H1 (cell line): ENCODE measurements at regions of chr1 and their contacts with region 1.

Region 1: DNA sequence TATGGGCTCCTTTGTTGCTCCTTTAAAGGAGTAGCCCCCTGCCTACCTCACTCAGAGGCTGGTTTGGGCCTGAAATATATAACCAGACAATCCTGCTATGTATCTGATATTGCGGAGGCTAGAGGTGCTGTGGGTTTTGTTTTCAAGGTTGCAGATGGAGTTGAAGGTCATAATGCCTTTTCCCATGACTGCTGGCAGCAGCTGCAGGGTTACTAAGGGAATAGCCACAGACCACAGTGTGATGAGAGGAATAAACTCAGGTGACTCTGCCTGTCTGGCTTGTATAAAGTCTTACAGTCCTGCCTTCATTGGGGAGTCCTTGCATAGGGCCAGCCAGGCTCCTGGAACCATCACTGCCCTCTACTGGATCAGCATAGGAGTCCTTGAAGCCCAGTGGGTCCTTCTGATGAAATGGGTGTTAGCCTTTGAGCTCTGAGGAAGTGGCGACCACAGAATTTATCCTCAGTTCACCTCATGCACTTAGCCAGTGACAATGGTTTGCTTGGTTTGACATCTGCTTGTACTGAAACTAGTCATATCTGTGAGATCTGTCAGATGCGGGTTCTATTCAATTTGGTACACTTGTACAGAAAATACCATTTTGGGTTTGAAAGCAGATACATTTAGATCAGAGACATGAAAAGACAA is 174.4 kb upstream of the HMCN1 start:
- DNase-seq: peak; percentile 51 to 54
- H3K4me3 ChIP-seq: no peak overlapping the region
- H3K27ac ChIP-seq: no peak overlapping the region
- H3K4me1 ChIP-seq: no peaks in the 10 kb centered on the region; a peak in 2 of 7 replicates
- H3K27me3 ChIP-seq: no peaks in the 10 kb centered on the region
- CTCF ChIP-seq: peak; percentile 66 to 86 (median 67)
- EP300 ChIP-seq: no peak
- POLR2A ChIP-seq: no peak
- RAD21 ChIP-seq: peak; percentile 81 to 86

Region 2: GRCh38 chr1:185317034-185317885 is 242.5 kb before region 1 on chr1 and contains the start of gene IVNS1ABP:
- CTCF ChIA-PET with region 1: interaction called, 12 read pairs
- POLR2A ChIA-PET with region 1: interaction called, 5 read pairs
- DNase-seq: peak; percentile 88 to 93
- H3K4me3 ChIP-seq: peak within 1 kb of the TSS; percentile 89 to 97 (median 92)
- H3K27ac ChIP-seq: peak within 1 kb of the TSS; percentile 92
- H3K4me1 ChIP-seq: peaks cover 0 to 4% (median 3%) of the 10 kb centered on the region in 4 experiments; a peak in 5 of 7 replicates
- H3K27me3 ChIP-seq: no peaks in the 10 kb centered on the region
- CTCF ChIP-seq: peak; percentile 47 to 68 (median 64)
- EP300 ChIP-seq: peak in 1 of 2 experiments; percentile 56; a peak in 1 of 3 replicates
- POLR2A ChIP-seq: peak; percentile 86 to 95
- RAD21 ChIP-seq: peak; percentile 73
- total RNA-seq, gene IVNS1ABP: 175 and 189 TPM in 2 replicates

Region 3: DNA sequence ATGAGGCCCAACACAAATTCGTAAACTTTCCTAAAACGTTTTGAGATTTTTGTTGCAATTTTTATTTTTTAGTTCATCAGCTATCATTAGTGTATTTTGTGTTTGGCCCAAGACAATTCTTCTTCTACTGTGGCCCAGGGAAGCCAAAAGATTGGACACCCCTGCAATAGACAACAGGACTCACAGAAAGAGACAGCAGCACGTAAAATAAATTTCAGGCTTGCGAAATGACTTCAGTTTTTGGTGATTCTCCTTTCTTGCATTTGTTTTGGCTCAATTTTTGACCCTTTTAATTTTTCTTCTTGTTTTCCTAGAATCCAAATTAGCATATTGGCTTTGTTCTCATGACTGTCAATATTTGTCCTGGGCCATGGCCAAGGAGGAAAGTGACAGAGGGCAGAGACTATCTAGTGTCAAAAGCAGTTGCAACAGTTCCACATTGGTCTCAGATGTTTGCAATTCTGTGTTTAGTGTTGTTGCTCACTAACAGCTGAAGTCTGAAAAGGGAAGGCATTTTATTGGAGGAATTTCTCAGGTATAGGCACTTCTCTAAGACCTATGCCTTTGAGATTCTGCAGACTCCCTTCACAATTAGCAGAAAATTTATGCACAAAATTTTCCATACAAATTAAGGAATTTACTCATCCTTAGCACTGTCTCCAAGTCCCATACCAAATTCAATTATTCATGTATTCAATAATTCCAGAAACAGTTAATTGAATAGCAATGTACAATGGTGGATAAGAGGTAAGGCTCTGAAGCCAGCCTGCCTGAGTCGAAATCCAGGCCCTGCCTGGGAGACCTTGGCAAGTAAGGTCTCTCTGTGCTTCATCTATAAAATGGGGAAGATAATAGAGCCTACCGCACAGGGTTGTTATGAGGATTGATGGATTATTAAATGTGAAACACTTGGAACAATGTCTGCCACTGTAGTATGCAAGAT is 81.9 kb before region 1 on chr1:
- CTCF ChIA-PET with region 1: no interaction called
- POLR2A ChIA-PET with region 1: no interaction called
- DNase-seq: no peak
- H3K4me3 ChIP-seq: no peak overlapping the region
- H3K27ac ChIP-seq: no peak overlapping the region
- H3K4me1 ChIP-seq: no peaks in the 10 kb centered on the region
- H3K27me3 ChIP-seq: no peaks in the 10 kb centered on the region
- CTCF ChIP-seq: no peak
- EP300 ChIP-seq: no peak
- POLR2A ChIP-seq: no peak
- RAD21 ChIP-seq: no peak

Region 4: GRCh38 chr1:185541871-185542301 is 17.9 kb before region 1 on chr1:
- CTCF ChIA-PET with region 1: interaction called, 15 read pairs
- POLR2A ChIA-PET with region 1: no interaction called
- DNase-seq: no peak
- H3K4me3 ChIP-seq: no peak overlapping the region
- H3K27ac ChIP-seq: no peak overlapping the region
- H3K4me1 ChIP-seq: peaks cover 2 to 12% (median 5%) of the 10 kb centered on the region in 4 experiments; a peak in 5 of 7 replicates
- H3K27me3 ChIP-seq: peaks cover 0 to 4% (median 2%) of the 10 kb centered on the region in 4 experiments; a peak in 1 of 7 replicates
- CTCF ChIP-seq: no peak
- EP300 ChIP-seq: no peak
- POLR2A ChIP-seq: no peak
- RAD21 ChIP-seq: no peak

Region 5: DNA sequence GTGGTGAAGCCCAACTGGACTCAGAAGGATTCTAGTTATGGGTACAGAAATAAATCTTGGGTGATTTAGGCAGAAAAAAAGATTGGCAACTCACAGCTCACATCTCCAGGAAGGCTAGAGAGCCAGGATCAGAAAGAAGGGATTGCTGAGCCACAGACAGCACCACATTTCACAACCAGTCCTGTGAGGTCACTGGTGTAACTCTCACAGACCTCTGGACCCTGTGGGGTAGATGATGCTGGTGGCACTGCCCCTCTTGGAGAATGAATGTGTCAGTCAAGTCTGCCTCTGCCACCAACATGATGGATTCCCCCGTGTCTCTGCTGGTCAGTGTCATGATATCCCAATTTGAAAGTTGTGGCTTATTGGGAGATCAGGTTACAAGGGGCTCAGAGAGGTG is 103.5 kb after region 1 on chr1:
- CTCF ChIA-PET with region 1: no interaction called
- POLR2A ChIA-PET with region 1: no interaction called
- DNase-seq: no peak
- H3K4me3 ChIP-seq: no peak overlapping the region
- H3K27ac ChIP-seq: no peak overlapping the region
- H3K4me1 ChIP-seq: peaks cover 0 to 4% (median 1%) of the 10 kb centered on the region in 4 experiments; a peak in 4 of 7 replicates
- H3K27me3 ChIP-seq: no peaks in the 10 kb centered on the region
- CTCF ChIP-seq: no peak
- EP300 ChIP-seq: no peak
- POLR2A ChIP-seq: no peak
- RAD21 ChIP-seq: no peak